Ovary (tissue), 10 donors: ENCODE measurements at regions of chr10 and their contacts with region 1.

Region 1: GRCh38 chr10:117320050-117320665 is 55.1 kb downstream of the PDZD8 start:
- DNase-seq: peak in 1 of 5 donors; percentile 19
- H3K4me3 ChIP-seq: no peak overlapping the region
- H3K27ac ChIP-seq: no peak overlapping the region
- H3K4me1 ChIP-seq: no peaks in the 10 kb centered on the region
- H3K27me3 ChIP-seq: no peaks in the 10 kb centered on the region
- CTCF ChIP-seq: peak; percentile 21 to 55 (median 38)
- EP300 ChIP-seq: no peak
- POLR2A ChIP-seq: no peak

Region 2: GRCh38 chr10:117216611-117217195 is 103.5 kb before region 1 on chr10:
- intact Hi-C with region 1: loop called in 3 of 4 experiments (anchors 2 to 5 kb)
- DNase-seq: peak; percentile 68 to 86 (median 82)
- H3K4me3 ChIP-seq: peak overlapping the region; percentile 40
- H3K27ac ChIP-seq: no peak overlapping the region
- H3K4me1 ChIP-seq: peaks cover 5% of the 10 kb centered on the region
- H3K27me3 ChIP-seq: no peaks in the 10 kb centered on the region
- CTCF ChIP-seq: peak; percentile 97 to 100 (median 100)
- EP300 ChIP-seq: no peak
- POLR2A ChIP-seq: no peak